Activated CD4-positive, alpha-beta memory T cell treated with anti-CD3 and anti-CD28 coated beads, Interleukin-2, amount 10 ng/mL, durations not matched to agents 7 days and 5 days (primary cell): ENCODE measurements at regions of chr19 and their contacts with region 1.

Region 1: DNA sequence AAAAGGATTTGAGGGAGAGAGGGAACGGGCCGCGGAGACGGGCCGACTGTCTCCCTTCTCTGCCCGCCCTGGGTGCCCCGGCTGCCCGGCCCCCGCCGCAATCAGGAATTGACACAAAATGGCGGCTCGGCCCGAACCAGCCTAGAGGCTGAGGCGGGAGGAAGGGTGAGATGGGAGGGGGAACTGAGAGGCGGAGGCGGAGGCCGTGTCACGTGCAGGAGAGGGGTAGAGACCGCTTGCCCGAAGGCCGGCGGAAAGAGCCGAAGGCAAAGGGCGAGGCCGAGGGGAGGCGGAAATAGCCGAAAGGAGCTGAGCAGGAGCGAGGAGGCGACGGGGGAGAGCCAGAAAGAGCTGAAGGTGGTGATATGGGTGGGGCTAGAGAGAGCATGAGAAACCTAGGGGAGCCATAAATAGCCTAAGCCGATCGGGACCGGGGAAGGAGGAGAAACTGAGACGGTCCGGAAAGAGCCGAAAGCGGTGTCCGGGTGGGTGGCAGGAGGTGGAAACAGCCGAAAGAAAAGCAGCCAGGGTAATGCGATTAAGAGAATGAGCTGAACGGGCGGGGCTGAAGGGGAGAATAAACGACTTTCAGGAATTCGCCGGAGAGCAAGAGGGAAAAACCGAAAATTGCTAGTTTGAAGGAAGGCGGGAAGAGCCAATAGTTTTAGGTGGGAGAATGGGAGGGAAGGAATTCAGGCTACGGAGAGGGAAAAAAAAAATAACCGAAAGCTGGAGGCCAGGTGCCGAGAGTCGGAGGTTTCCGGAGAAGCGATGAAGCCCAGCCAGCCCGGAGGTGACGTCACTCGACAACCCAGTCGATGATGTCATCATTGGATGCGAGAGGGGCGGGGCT is at the start of gene ZC3H4:
- DNase-seq: peak; percentile 100
- H3K4me3 Mint-ChIP-seq: peak within 1 kb of the TSS; percentile 90
- H3K27ac Mint-ChIP-seq: peak within 1 kb of the TSS; percentile 100
- H3K4me1 Mint-ChIP-seq: peaks cover 32% of the 10 kb centered on the region
- H3K27me3 Mint-ChIP-seq: no peaks in the 10 kb centered on the region
- total RNA-seq, gene ZC3H4: 98.3 to 104 TPM

Region 2: DNA sequence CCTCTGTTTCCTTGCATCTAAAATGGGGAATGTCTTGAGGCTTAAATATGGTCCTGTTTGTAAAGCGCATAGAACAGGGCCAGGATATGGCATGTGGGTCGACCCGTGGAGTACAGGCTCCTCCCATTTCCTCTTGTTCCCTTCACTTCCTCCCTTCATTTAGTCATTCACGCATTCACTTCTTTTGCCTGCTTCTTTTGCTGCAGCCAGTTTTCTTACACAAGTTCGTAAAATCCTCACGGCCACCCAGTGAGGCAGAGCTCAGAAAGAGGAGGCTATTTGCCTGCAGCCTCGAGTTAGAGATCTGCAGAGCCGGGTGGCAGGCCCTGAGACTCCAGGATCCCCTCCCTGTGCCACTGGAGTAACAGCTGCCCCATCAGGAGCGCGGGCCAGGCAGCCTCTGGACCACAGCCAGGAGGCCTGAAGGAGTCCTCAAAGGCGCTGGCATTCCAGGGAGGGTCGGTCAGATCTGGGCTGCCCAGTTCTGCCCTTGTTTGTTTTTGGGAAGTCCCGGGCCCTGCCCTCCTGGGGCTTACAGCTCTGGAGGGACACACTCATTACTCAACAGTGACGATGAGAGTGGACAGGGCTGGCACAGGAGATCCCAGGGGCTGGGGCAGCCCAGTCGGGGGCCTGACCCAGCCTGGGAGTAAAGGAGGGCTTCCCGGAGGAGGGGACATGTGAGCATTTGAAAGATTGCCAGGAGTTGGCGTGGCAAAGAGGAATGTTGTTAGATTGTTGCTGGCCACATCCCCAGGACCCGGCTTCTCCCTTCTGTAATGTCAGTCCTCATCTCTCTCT is 761.8 kb before region 1 on chr19:
- CTCF ChIA-PET with region 1: no interaction called
- POLR2A ChIA-PET with region 1: no interaction called
- DNase-seq: peak; percentile 54
- H3K4me3 Mint-ChIP-seq: peak overlapping the region; percentile 83
- H3K27ac Mint-ChIP-seq: peak overlapping the region; percentile 99
- H3K4me1 Mint-ChIP-seq: peaks cover 66% of the 10 kb centered on the region
- H3K27me3 Mint-ChIP-seq: no peaks in the 10 kb centered on the region

Region 3: DNA sequence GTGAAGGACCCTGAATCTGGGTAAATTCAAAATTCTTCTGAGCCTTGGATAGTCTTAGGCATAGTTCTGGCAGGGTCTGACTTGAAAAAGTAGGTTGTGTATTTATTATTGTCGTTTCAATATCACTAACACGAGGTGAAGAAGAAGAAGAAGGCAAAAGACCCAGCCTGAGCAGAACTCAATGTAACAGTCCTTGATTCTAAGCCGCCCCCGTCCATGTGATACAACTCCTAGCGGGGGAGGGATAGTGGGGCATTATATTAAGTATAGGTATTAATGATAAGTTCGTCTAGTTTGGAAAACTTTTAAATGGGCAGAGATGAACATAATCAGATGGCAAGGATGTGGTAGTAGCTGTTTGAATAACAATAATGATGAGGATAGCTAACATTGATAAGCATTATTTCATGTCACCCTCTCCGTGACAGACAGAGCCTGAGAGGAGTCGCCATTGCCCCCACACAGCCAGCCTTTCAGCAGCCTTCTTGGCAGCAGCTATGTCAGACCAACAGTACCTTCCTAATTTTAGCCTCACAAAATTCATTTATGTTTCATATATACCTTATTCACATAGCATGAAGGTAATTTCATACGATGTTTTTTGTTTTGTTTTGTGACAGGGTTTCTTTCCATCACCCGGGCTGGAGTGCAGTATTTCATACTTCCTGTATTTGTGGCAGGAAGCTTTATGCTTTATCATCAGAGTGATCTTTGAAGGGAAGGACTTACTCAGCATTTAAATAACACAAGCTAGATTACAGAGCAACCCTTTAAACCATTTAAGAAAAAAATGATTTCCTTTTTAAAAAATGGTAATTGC is 158.0 kb before region 1 on chr19:
- CTCF ChIA-PET with region 1: no interaction called
- POLR2A ChIA-PET with region 1: interaction called, 12 read pairs
- DNase-seq: peak; percentile 49
- H3K4me3 Mint-ChIP-seq: peak overlapping the region; percentile 75
- H3K27ac Mint-ChIP-seq: peak overlapping the region; percentile 99
- H3K4me1 Mint-ChIP-seq: peaks cover 79% of the 10 kb centered on the region
- H3K27me3 Mint-ChIP-seq: no peaks in the 10 kb centered on the region

Region 4: GRCh38 chr19:46975925-46976782 is 137.1 kb before region 1 on chr19:
- CTCF ChIA-PET with region 1: no interaction called
- POLR2A ChIA-PET with region 1: no interaction called
- DNase-seq: no peak
- H3K4me3 Mint-ChIP-seq: no peak overlapping the region
- H3K27ac Mint-ChIP-seq: no peak overlapping the region
- H3K4me1 Mint-ChIP-seq: peaks cover 22% of the 10 kb centered on the region
- H3K27me3 Mint-ChIP-seq: no peaks in the 10 kb centered on the region

Region 5: GRCh38 chr19:47075179-47075810 is 37.9 kb before region 1 on chr19:
- CTCF ChIA-PET with region 1: interaction called, 16 read pairs
- POLR2A ChIA-PET with region 1: interaction called, 41 read pairs
- DNase-seq: no peak
- H3K4me3 Mint-ChIP-seq: no peak overlapping the region
- H3K27ac Mint-ChIP-seq: peak overlapping the region; percentile 40
- H3K4me1 Mint-ChIP-seq: peaks cover 11% of the 10 kb centered on the region
- H3K27me3 Mint-ChIP-seq: no peaks in the 10 kb centered on the region

Region 6: DNA sequence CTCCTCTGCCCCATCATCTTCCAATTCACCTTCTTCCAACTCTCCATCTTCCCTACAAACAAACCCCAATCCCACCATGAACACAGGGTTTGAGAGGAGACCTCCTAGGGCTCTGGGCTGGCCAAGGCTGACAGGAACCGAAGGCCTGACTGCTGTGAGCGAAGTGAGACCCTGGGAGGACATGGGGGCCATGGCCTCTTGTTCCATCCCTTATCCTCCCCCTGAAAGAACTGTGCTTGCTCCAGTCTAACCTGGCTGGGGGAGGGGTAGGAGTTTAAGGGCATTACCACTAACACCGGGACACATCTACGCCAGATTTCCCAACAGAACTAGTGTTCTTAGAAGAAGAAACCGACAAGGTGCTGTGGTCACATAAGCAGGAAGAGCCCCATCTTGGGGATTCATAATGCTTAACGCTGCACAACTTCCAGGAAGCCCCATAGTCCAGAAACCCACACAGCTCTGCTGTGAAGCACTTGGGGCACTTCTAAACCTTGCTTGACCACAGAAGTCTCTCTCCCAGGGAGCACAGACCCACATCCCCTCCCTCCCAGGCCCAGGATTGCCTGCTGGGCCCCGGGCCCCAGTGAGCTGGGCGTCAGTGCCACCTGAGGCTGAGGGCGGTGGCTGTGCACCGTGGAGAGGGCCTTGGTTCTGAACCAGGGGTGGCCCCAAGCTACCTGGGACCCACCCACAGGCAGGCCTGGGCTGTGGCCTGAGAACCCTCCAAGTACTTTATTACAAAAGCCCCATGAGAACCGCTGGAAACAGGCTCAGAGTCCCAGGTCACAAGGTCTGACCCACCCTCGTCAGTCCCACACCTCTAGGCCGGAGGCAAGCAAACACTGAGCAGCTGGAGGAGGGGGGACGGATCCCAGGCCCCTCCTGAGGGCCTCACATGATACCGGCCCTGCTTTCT is 18.4 kb before region 1 on chr19:
- CTCF ChIA-PET with region 1: interaction called, 9 read pairs
- POLR2A ChIA-PET with region 1: interaction called, 704 read pairs
- DNase-seq: peak; percentile 74
- H3K4me3 Mint-ChIP-seq: peak overlapping the region; percentile 79
- H3K27ac Mint-ChIP-seq: peak overlapping the region; percentile 91
- H3K4me1 Mint-ChIP-seq: peaks cover 83% of the 10 kb centered on the region
- H3K27me3 Mint-ChIP-seq: no peaks in the 10 kb centered on the region

Region 7: DNA sequence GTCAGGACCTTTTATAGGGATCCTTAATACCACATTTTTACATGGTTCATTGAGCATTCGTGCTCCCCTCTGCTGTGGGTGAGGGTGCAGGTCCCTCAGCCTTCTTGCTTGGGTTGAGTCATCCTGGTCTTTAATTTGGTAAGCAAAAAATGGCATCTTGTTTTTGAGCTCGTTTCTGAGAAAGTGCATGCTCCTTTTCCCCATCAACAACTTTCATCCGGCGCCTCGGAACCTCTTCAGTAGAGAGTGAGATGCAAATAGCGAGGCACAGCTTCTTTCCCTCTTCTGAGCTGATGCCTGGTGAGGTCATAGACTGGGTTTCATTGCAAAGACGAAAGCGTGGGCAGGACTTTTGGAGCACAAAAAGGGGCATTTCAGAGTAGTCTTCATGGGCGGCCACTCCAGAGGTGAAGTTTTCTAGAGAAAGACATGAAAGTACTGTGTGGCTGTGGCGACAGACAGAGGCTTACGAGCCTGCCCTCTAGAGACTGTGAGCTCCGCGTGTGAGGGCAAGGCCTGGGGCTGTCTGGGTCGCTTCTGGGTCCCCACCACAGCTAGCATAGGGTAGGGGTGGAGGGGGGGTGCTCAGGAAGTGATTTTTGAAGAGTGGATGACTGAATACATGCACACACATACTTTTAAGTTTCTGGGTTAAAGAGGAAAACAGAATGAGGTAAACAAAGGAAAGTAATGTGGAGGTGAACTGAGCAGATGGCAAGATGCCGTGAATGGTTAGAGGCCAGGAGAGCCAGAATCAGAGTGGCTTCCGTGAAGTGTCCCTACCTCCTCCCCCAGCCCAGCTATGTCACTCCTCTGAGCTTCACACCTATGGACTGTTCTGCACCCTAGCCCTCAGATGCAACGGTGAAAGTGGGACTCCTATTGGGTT is 73.5 kb after region 1 on chr19:
- CTCF ChIA-PET with region 1: interaction called, 3 read pairs
- POLR2A ChIA-PET with region 1: interaction called, 18 read pairs
- DNase-seq: peak; percentile 77
- H3K4me3 Mint-ChIP-seq: peak overlapping the region; percentile 28
- H3K27ac Mint-ChIP-seq: peak overlapping the region; percentile 90
- H3K4me1 Mint-ChIP-seq: peaks cover 79% of the 10 kb centered on the region
- H3K27me3 Mint-ChIP-seq: no peaks in the 10 kb centered on the region

Region 8: GRCh38 chr19:47243776-47244547 is 130.7 kb after region 1 on chr19:
- CTCF ChIA-PET with region 1: interaction called, 21 read pairs
- POLR2A ChIA-PET with region 1: interaction called, 23 read pairs
- DNase-seq: peak; percentile 94
- H3K4me3 Mint-ChIP-seq: peak overlapping the region; percentile 70
- H3K27ac Mint-ChIP-seq: peak overlapping the region; percentile 87
- H3K4me1 Mint-ChIP-seq: peaks cover 30% of the 10 kb centered on the region
- H3K27me3 Mint-ChIP-seq: peaks cover 7% of the 10 kb centered on the region

Region 9: GRCh38 chr19:47336853-47337279 is 223.6 kb after region 1 on chr19:
- CTCF ChIA-PET with region 1: no interaction called
- POLR2A ChIA-PET with region 1: no interaction called
- DNase-seq: peak; percentile 63
- H3K4me3 Mint-ChIP-seq: peak overlapping the region; percentile 49
- H3K27ac Mint-ChIP-seq: peak overlapping the region; percentile 91
- H3K4me1 Mint-ChIP-seq: peaks cover 26% of the 10 kb centered on the region
- H3K27me3 Mint-ChIP-seq: peaks cover 5% of the 10 kb centered on the region